Aorta (tissue), 5 donors: ENCODE measurements at regions of chr1 and their contacts with region 1.

Region 1: DNA sequence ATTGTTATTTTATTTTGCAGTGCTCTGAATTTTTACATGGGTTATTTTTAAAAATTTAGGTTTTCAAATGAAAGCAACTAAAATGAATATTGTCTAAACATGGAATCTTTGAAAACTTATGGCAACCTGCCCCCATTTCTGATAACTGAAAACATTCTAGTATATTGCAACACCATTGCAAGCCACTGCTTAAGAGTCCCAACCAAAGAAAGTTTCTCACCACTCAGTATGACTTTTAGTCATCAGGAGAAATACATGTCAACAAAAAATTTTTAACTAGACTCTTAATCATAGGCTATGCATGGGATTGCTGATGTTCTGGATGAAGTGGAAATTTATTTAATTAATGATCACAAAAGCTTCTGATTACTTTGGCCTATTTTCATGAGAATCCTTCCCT is 112.1 kb downstream of the TNFSF18 start:
- DNase-seq: no peak
- ATAC-seq: no peak
- H3K4me3 ChIP-seq: no peak overlapping the region
- H3K27ac ChIP-seq: no peak overlapping the region
- H3K4me1 ChIP-seq: peaks cover 3 to 4% of the 10 kb centered on the region in 2 donors
- H3K27me3 ChIP-seq: no peaks in the 10 kb centered on the region

Region 2: DNA sequence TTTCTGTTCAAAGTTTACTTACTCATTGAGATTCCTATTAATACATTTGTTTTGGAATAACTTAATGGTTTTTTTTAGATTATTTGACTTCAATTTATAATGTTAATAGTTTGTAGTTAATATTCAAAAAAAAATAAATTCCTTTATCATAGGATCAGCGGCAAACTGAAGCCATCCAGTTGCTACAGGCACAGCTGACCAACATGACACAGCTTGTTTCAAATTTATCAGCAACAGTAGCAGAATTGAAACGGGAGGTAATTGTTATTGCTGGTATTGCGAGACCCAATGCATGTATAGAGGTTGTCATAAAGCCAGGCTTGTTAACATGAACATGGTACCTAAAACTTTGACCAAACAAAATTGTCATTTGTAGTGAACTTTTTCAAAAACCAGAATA is 338.8 kb before region 1 on chr1:
- intact Hi-C with region 1: no loop called
- DNase-seq: no peak
- ATAC-seq: no peak
- H3K4me3 ChIP-seq: no peak overlapping the region
- H3K27ac ChIP-seq: no peak overlapping the region
- H3K4me1 ChIP-seq: no peaks in the 10 kb centered on the region
- H3K27me3 ChIP-seq: no peaks in the 10 kb centered on the region

Region 3: GRCh38 chr1:173190101-173190906 is 251.6 kb after region 1 on chr1:
- intact Hi-C with region 1: loop called in 1 of 2 experiments (anchors 10 kb)
- DNase-seq: peak; percentile 87 to 89
- ATAC-seq: peak; percentile 87
- H3K4me3 ChIP-seq: no peak overlapping the region
- H3K27ac ChIP-seq: peak overlapping the region; percentile 18 to 96
- H3K4me1 ChIP-seq: no peaks in the 10 kb centered on the region
- H3K27me3 ChIP-seq: no peaks in the 10 kb centered on the region